Activated CD4-positive, alpha-beta memory T cell treated with anti-CD3 and anti-CD28 coated beads for 36 hours (primary cell): ENCODE measurements at regions of chr1 and their contacts with region 1.

Region 1: DNA sequence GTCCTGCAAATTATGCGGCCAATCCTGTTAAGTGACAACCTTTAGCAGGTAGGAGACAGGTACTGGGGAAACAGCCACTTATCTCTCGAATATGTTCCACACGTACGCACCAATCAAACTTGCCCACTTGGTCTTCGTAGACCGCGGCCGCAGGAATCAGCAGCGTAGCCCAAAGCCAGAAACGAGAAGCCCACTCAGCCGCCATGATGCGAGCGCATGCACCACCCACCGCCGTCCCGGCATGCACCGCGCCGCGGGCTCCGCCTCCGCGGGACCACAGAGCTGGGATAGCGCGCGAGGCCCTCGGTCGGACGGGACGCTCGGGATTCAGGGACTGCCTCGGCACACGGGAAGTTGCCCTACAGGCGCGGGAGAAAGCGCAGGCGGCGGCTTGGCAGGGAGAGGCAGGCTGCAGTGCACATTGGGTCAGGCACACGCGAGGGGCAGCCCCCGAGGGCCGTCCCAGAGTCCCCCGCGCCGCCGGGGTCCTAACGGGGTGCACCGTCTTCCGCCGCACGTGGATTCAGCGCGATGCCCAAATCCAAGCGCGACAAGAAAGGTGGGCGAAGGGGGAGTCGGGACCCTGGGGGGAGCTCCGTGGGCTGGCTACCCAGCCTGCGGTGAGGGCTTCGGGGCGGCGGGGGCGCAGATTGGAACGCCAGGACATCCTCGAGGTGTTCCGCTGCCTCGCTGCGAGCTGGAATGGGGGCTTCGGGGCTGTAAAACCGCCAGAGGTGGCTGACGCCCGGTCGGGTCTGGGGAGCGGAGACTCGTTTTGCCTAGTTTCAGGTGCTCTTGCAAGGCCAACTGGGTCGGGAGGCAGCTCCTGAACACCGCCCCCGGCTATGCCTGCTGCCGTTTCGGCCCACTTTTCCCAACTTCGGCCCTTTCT is at the starts of genes EMC1 and MRTO4:
- DNase-seq: peak; percentile 92
- H3K4me3 Mint-ChIP-seq: peak within 1 kb of the TSS; percentile 98
- H3K27ac Mint-ChIP-seq: peak within 1 kb of the TSS; percentile 95
- H3K4me1 Mint-ChIP-seq: peaks cover 43% of the 10 kb centered on the region
- H3K27me3 Mint-ChIP-seq: no peaks in the 10 kb centered on the region
- total RNA-seq, gene EMC1: 46.6 to 49.3 TPM
- total RNA-seq, gene MRTO4: 83.0 to 83.8 TPM

Region 2: GRCh38 chr1:19101244-19101643 is 150.3 kb before region 1 on chr1:
- CTCF ChIA-PET with region 1: no interaction called
- POLR2A ChIA-PET with region 1: no interaction called
- intact Hi-C with region 1: no loop called
- DNase-seq: no peak
- H3K4me3 Mint-ChIP-seq: no peak overlapping the region
- H3K27ac Mint-ChIP-seq: no peak overlapping the region
- H3K4me1 Mint-ChIP-seq: no peaks in the 10 kb centered on the region
- H3K27me3 Mint-ChIP-seq: no peaks in the 10 kb centered on the region

Region 3: DNA sequence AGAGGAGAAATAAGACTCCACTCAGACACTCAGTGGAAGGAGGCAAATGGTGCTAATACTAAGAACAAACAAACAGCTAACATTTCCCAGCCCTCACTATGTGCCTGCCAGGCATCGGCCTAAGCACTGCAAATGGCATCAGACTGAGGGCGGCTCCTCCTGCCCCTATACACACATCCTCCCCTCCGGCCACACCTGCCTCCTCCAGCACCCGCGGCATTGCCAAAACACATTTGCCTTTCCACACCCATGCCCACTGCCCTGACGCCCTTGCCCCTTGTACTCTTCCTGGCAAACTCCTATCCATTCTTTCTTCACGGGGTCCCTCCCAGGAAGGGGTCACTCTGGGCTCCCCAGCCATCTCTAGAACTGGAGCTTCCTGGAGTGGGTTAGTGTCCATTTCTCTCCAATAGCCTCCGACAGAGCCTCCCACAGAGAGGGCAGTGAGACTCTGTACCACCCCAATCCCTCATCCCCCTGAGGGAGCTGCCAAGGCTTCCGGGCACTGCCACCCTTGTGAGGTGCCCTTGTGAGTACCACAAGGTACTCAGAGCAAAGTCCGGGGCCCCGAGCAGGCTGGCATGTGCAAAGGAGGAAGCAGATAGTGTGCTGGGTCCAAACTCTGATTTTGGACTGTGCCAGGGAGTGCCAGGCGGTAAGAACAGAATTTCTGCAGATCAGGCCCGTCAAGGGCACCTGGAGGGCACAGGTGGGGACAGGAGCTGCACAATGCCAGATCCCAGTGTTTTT is 36.1 kb after region 1 on chr1:
- CTCF ChIA-PET with region 1: no interaction called
- POLR2A ChIA-PET with region 1: no interaction called
- intact Hi-C with region 1: no loop called
- DNase-seq: no peak
- H3K4me3 Mint-ChIP-seq: peak overlapping the region; percentile 21
- H3K27ac Mint-ChIP-seq: no peak overlapping the region
- H3K4me1 Mint-ChIP-seq: peaks cover 5% of the 10 kb centered on the region
- H3K27me3 Mint-ChIP-seq: no peaks in the 10 kb centered on the region

Region 4: DNA sequence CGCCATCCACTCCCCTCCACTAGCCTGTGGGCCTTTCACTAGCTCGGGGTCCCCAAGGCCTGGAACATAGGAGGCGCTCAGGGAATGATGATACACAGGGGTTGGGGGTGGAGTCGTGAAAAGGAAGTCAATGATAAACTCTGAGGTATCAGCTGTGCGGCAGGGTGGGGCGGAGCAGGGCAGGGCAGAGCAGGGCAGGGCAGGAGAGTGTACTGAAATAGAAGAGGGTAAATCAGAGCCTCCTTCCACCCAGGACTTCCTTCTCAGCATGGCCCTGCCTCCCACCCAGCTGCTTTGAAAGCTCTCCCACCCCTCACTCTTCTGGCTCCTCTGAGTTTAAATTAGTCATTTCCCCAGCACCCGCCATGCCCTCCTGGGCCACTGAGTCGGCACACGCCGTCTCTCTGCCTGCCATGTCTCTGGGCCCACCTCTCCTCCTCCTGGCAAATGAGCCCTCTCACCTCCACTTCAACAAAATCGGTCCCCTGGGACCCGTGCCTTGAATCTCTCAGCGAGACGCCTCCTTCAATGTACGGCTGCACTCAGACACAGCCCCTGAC is 216.9 kb after region 1 on chr1:
- CTCF ChIA-PET with region 1: no interaction called
- POLR2A ChIA-PET with region 1: interaction called, 3 read pairs
- intact Hi-C with region 1: loop called (anchors 10 kb)
- DNase-seq: peak; percentile 82
- H3K4me3 Mint-ChIP-seq: peak overlapping the region; percentile 39
- H3K27ac Mint-ChIP-seq: peak overlapping the region; percentile 91
- H3K4me1 Mint-ChIP-seq: peaks cover 89% of the 10 kb centered on the region
- H3K27me3 Mint-ChIP-seq: no peaks in the 10 kb centered on the region